ENCODE measurements at regions of chr2 and their contacts with region 1.

Region 1: DNA sequence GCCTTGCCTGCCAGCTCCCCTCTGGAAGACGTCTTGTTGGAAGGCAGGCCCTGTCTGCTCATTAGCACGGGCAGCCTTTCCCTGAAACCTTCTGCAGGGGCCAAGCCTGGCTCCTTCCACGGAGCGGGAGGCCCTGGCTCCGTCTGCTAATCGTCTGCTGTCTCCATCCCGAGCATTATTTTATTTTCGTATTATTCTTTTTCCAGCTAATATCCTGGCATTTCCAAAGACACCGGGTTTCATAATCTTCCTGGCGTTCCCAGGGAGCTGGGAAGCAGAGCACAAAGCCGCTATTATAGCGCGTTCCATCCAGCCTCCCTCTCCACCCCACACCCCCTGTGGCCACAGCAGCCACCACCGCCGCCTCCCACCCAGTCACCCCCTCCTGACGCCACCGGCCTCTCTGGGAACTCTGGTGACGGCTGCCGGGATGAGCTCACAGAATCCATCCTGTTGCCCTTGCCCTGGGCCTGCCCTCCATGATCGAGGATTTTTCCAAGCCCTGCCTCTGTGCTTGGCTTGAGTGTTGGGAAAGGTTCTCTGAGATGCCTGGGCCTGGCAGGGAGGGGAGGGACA is 125.5 kb downstream of the DYSF start:
- DNase-seq: peak in 9 of 10 donors; percentile 79 to 91 (median 90)
- H3K4me3 ChIP-seq: peak overlapping the region in 42 of 59 donors; percentile 3 to 66 (median 25)
- H3K27ac ChIP-seq: peak overlapping the region; percentile 84 to 100 (median 97)
- H3K27me3 ChIP-seq: no peaks in the 10 kb centered on the region
- CTCF ChIP-seq: peak in 18 of 56 donors; percentile 6 to 44 (median 27)

Region 2: DNA sequence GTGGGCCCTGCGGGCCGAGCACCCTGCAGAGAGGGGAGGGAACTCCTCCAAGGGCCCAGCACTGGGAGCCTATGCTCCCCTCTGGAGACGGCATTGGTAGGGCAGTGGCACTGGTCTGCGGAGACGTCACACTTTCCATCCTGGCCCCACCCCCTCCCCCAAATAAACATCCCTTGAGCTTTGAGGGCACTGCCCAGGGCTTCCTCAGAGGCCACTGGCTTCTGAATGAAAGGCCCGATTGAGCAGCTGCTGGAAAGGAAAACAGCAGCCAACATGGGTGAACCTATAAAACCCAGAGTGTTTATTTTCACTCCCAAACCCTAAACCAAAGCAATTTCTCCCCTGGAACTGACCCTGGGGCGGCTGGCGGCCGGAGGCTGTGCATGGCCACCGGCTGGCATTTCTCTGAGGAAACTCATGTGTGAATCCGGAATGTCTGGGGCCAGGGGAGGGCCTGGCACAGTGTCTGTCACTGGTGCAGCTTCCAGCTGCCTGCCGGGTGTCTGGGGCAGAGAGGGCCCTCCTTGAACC is 13.4 kb after region 1 on chr2:
- intact Hi-C with region 1: loop called (anchors 1 kb)
- DNase-seq: peak in 9 of 10 donors; percentile 40 to 78 (median 68)
- H3K4me3 ChIP-seq: peak overlapping the region in 1 of 59 donors; percentile 22
- H3K27ac ChIP-seq: peak overlapping the region; percentile 53 to 99 (median 95)
- H3K27me3 ChIP-seq: no peaks in the 10 kb centered on the region
- CTCF ChIP-seq: peak in 2 of 56 donors; percentile 9 to 13